Caki2 (cell line): ENCODE measurements at regions of chr10 and their contacts with region 1.

Region 1: DNA sequence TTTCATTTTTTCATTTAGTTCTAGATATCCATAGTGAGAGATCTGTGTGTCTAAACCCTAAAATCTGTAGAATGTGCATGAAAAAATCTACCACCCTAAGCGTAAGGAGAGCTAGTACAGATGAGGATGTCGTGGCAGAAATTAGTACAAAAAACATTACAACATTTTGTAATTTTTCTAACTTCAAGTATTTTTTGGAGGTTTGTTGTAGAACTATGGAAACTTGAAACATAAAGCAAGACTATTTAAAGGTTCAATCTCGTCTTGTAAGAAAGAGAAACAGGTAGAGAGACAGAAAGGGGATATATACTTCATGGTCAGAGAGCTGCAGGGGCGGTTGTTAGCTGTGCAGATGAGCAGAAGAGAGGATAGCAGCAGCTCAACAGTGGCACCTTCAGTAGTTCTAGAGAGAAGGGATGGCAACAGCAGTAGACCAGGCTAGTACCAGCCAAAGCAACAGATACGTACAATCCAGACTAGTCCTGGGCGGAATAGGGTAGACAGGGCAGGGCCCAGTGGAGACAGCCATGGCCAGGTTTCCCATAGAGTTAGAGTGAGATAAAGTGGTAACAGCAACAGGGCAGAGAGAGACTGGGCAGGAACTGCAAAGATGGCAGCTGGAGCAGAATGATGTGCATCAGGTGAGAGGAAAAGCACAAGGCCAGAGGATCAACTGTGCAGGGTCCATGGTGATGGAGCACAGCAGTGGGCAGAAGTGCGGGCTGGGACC is 145.2 kb downstream of the FRMD4A start:
- DNase-seq: peak; percentile 76

Region 2: GRCh38 chr10:14312014-14312413 is 126.5 kb after region 1 on chr10:
- in situ Hi-C with region 1: loop called (anchors 10 kb)
- DNase-seq: no peak